ENCODE measurements at regions of chr5 and their contacts with region 1.

Region 1: GRCh38 chr5:147949711-147950573 is 43.6 kb upstream of the C5orf46 start:
- DNase-seq: peak; percentile 33
- ATAC-seq: peak; percentile 87
- H3K4me3 ChIP-seq: no peak overlapping the region
- H3K27ac ChIP-seq: no peak overlapping the region
- H3K4me1 ChIP-seq: no peaks in the 10 kb centered on the region
- H3K27me3 ChIP-seq: no peaks in the 10 kb centered on the region
- CTCF ChIP-seq: peak; percentile 50 to 79 (median 77); a peak in 5 of 6 replicates
- POLR2A ChIP-seq: no peak
- RAD21 ChIP-seq: peak; percentile 78

Region 2: GRCh38 chr5:148125641-148126040 is 175.7 kb after region 1 on chr5:
- CTCF ChIA-PET with region 1: interaction called, 3 read pairs
- POLR2A ChIA-PET with region 1: no interaction called
- RAD21 ChIA-PET with region 1: no interaction called
- intact Hi-C with region 1: loop called (anchors 1 kb)
- DNase-seq: no peak
- ATAC-seq: peak; percentile 61; the same call in 1 of the 2 replicates
- H3K4me3 ChIP-seq: no peak overlapping the region
- H3K27ac ChIP-seq: no peak overlapping the region
- H3K4me1 ChIP-seq: no peaks in the 10 kb centered on the region
- H3K27me3 ChIP-seq: no peaks in the 10 kb centered on the region; the same call in 1 of the 2 replicates
- CTCF ChIP-seq: peak in 2 of 3 experiments; percentile 15 to 21; a peak in 1 of 6 replicates
- POLR2A ChIP-seq: no peak
- RAD21 ChIP-seq: no peak

Measured in HCT116 (cell line).